Activated CD8-positive, alpha-beta T cell treated with anti-CD3 and anti-CD28 coated beads for 36 hours (primary cell): ENCODE measurements at regions of chr2 and their contacts with region 1.

Region 1: GRCh38 chr2:210503001-210503623 is 26.6 kb upstream of the LANCL1 start:
- DNase-seq: peak; percentile 46
- ATAC-seq: peak; percentile 30
- H3K4me3 Mint-ChIP-seq: peak overlapping the region; percentile 47
- H3K27ac Mint-ChIP-seq: no peak overlapping the region
- H3K4me1 Mint-ChIP-seq: peaks cover 3% of the 10 kb centered on the region
- H3K27me3 Mint-ChIP-seq: peaks cover 18% of the 10 kb centered on the region
- CTCF ChIP-seq: peak; percentile 81

Region 2: GRCh38 chr2:210399440-210400041 is 103.6 kb before region 1 on chr2:
- CTCF ChIA-PET with region 1: no interaction called
- POLR2A ChIA-PET with region 1: no interaction called
- intact Hi-C with region 1: no loop called
- DNase-seq: no peak
- ATAC-seq: no peak
- H3K4me3 Mint-ChIP-seq: no peak overlapping the region
- H3K27ac Mint-ChIP-seq: no peak overlapping the region
- H3K4me1 Mint-ChIP-seq: no peaks in the 10 kb centered on the region
- H3K27me3 Mint-ChIP-seq: peaks cover 2% of the 10 kb centered on the region
- CTCF ChIP-seq: peak; percentile 19

Region 3: GRCh38 chr2:210410542-210410941 is 92.6 kb before region 1 on chr2:
- CTCF ChIA-PET with region 1: no interaction called
- POLR2A ChIA-PET with region 1: no interaction called
- intact Hi-C with region 1: no loop called
- DNase-seq: no peak
- ATAC-seq: no peak
- H3K4me3 Mint-ChIP-seq: no peak overlapping the region
- H3K27ac Mint-ChIP-seq: no peak overlapping the region
- H3K4me1 Mint-ChIP-seq: no peaks in the 10 kb centered on the region
- H3K27me3 Mint-ChIP-seq: peaks cover 4% of the 10 kb centered on the region
- CTCF ChIP-seq: no peak

Region 4: DNA sequence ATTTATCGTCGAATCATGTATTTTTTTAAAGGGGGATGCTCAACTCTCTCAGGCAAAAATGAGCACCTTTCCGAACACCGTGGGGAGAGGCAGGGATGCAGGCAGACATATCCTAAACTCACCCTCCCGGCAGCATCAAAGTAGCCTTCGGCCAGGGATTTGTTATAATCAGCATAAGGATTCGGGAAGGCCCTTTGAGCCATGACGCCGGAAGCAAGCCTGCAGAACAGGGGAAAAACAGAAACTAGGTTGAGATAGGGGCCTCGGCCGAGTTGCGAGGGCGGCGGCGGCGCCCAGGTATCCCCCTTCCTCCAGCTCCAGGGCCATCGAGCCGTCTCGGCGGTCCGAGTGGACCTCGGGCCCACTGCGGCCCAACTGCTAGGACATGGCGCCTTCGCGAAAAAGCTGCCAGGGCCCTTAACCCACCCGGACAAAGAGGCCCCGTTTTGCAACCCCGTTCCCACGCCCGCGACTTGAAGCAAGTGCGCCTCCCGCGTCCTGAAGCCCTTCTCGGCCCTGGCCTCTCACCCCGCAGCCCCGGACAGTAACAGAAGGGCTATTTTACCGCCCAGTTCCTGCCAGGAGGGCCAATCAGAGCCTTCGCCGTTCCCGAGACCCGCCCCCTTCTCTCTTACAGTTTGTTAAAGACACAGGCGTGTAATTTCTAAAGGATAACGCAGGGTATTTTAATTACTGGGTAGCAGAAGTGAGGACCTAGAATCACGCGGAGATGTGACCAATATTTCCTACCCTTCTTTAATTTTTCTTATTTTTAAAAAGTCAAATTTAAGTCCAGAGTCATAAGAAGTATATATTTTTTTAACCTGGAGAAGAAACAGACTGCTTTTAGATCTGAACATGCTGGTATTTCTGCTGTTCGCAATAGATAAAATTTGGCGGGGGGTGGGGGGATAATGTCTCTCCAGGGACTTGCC is 26.7 kb before region 1 on chr2 and contains the start of gene LANCL1:
- CTCF ChIA-PET with region 1: interaction called, 18 read pairs
- POLR2A ChIA-PET with region 1: no interaction called
- intact Hi-C with region 1: no loop called
- DNase-seq: peak; percentile 93
- ATAC-seq: peak; percentile 99
- H3K4me3 Mint-ChIP-seq: peak within 1 kb of the TSS; percentile 96
- H3K27ac Mint-ChIP-seq: peak within 1 kb of the TSS; percentile 98
- H3K4me1 Mint-ChIP-seq: peaks cover 46% of the 10 kb centered on the region
- H3K27me3 Mint-ChIP-seq: no peaks in the 10 kb centered on the region
- CTCF ChIP-seq: no peak
- total RNA-seq, gene LANCL1: 34.0 to 36.9 TPM

Region 5: GRCh38 chr2:210519594-210519993 is 16.5 kb after region 1 on chr2:
- CTCF ChIA-PET with region 1: interaction called, 10 read pairs
- POLR2A ChIA-PET with region 1: no interaction called
- intact Hi-C with region 1: no loop called
- DNase-seq: no peak
- ATAC-seq: no peak
- H3K4me3 Mint-ChIP-seq: no peak overlapping the region
- H3K27ac Mint-ChIP-seq: no peak overlapping the region
- H3K4me1 Mint-ChIP-seq: no peaks in the 10 kb centered on the region
- H3K27me3 Mint-ChIP-seq: peaks cover 12% of the 10 kb centered on the region
- CTCF ChIP-seq: no peak

Region 6: DNA sequence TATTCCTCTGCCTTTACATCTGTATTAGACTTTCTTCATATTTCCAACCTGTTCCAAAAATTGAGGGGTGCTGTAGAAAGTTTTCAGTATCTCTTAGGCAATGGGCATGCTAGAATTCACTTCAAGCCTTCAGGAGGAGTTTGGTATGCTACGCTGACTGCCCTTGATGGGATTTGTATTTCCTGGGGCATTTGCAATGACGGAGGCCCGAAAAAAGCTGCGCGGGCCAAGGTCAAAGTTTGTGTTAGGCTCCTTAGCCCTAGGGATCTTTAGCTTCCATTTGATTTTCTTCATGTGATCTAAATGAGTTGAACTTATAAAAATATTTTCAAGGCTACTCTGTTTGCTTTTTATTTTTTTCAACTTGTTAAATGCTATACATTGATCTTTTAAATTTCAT is 58.4 kb after region 1 on chr2:
- CTCF ChIA-PET with region 1: interaction called, 13 read pairs
- POLR2A ChIA-PET with region 1: no interaction called
- intact Hi-C with region 1: no loop called
- DNase-seq: no peak
- ATAC-seq: no peak
- H3K4me3 Mint-ChIP-seq: no peak overlapping the region
- H3K27ac Mint-ChIP-seq: no peak overlapping the region
- H3K4me1 Mint-ChIP-seq: no peaks in the 10 kb centered on the region
- H3K27me3 Mint-ChIP-seq: no peaks in the 10 kb centered on the region
- CTCF ChIP-seq: no peak